ENCODE measurements at regions of chr17 and their contacts with region 1.

Region 1: GRCh38 chr17:48928876-48929811 is 15.5 kb downstream of the SNF8 start:
- DNase-seq: no peak
- ATAC-seq: no peak
- H3K4me3 Mint-ChIP-seq: no peak overlapping the region
- H3K27ac Mint-ChIP-seq: peak overlapping the region; percentile 8
- H3K4me1 Mint-ChIP-seq: no peaks in the 10 kb centered on the region
- H3K27me3 Mint-ChIP-seq: no peaks in the 10 kb centered on the region
- CTCF ChIP-seq: no peak

Region 2: GRCh38 chr17:48915459-48916282 is 13.5 kb before region 1 on chr17:
- CTCF ChIA-PET with region 1: no interaction called
- POLR2A ChIA-PET with region 1: interaction called, 16 read pairs
- intact Hi-C with region 1: no loop called
- DNase-seq: peak; percentile 79
- ATAC-seq: peak; percentile 92
- H3K4me3 Mint-ChIP-seq: peak overlapping the region; percentile 67
- H3K27ac Mint-ChIP-seq: peak overlapping the region; percentile 95
- H3K4me1 Mint-ChIP-seq: peaks cover 51% of the 10 kb centered on the region
- H3K27me3 Mint-ChIP-seq: no peaks in the 10 kb centered on the region
- CTCF ChIP-seq: no peak

Region 3: DNA sequence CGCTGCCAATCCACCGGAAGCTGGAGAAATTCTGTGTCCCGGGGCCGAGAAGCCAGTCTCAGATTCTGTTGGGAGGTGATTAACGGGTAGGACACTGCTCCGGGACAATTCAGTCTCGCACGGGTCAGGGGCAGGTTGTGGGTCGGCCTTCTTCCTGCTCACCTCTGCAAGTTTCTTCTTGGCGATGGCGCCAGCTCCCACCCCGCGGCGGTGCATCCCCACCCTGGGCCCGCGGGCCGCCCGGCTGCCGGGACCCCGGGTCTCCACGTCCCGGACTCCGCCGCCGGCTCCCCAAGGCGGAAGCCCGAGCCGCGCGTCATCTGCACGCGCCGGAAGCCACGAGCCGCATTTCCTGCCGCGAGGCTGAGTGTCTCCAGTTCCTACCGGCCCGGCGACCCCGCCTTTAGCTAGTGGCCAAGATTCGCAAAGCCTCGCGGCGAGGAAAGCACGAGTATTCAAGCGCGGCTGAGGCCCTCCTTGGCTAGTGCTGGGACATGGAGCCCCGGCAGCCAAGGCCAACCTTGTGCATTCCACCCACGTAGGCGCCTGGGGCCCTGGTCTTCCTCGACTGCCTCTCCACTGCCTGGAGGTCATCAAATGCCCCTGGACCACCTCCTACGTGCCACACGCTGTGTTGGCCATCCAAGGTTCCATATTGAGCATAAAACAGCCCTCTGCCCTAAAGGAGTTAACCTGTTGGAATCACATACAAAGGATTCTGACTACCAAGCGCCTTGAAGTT is 15.5 kb after region 1 on chr17 and contains the start of gene SNF8:
- CTCF ChIA-PET with region 1: no interaction called
- POLR2A ChIA-PET with region 1: interaction called, 28 read pairs
- intact Hi-C with region 1: no loop called
- DNase-seq: peak; percentile 97
- ATAC-seq: peak; percentile 95
- H3K4me3 Mint-ChIP-seq: peak within 1 kb of the TSS; percentile 99
- H3K27ac Mint-ChIP-seq: peak within 1 kb of the TSS; percentile 96
- H3K4me1 Mint-ChIP-seq: peaks cover 11% of the 10 kb centered on the region
- H3K27me3 Mint-ChIP-seq: no peaks in the 10 kb centered on the region
- CTCF ChIP-seq: no peak
- total RNA-seq, gene SNF8: 87.5 to 99.7 TPM